Posterior vena cava (tissue), 2 donors: ENCODE measurements at regions of chr3 and their contacts with region 1.

Region 1: DNA sequence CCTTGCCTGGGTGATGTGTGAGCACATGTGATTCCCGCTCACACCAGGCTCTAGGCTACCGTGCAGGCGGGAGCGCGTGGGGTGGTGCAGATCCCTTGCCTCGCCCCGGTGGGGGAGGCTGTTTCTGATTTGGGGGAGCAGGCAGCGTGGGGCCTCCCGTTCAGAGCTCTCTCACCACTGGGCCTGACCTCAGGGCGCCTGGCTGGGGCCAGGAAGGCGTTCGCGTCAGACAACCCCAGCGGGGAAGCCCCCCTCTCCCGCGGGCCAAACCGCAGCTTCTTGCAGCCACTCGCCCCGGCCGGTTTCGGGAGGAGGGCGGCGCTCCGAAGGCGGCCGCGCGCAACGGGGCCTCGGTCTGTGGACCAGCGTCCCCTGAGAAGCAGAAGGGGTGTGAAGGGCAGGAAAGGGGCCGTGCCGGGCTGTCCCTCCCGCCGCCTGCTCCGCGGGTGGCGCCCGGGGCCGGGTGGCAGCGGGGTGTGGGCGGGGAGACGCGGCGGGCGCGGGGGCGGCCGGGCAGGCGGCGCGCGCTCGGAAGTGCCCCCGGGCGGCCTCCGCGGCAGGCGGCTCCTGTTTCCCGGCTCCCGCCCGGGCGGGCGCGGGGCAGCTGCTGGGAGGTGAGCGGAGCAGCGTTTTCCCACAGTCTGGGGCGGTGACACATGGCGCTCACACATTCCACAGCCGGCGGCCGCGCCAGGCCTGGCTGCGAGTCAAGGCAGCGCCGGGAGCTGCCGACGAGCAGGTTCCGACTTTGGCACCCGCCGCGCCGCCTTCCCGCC is 65.1 kb upstream of the HES1 start:
- DNase-seq: peak; percentile 94

Region 2: DNA sequence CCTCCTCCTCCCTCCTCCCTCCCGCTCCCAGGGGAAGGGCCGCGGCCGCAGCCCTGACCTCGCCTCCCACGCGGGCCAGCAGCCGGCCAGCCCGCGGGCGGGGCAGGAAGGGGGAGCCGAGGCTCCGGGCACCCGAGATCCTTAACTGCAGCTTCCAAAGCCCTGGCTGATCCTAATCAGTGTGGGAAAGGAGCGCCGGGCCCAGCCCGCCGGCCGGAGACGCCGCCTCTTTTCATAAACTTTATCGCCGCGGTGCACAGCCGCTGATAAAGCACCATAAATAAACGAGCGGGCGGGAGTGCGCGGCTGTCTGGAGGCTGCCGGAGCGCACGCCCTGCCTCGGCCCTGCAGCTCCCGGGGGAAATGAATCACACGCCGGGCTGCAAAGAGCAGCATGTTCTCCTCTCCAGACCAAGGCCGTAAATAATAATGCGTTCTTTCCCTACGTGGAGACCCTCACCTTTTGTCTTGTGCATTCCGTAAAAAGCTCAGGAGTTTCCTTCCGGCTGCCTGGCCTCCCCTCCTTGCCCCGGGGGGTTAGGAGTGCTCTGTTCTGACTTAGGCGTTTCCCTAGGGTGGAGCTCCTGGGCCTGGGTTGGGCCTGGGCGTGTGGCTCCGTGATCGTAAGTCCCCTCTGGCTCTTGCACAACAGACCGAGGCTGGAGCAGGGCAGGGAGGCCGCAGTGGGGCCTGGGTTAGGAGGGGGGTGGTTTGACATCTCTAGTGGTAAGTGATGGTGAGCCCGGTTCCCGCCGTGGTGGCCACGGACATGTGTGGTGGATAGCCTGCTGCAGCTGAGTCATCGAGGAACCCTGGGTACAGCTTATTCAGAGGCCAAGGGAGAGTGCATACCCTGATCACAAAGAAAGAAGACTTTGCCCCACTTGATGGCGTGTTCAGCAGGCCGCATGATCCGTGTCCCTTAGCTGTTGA is 67.4 kb before region 1 on chr3:
- intact Hi-C with region 1: loop called in 1 of 2 experiments (anchors 10 kb)
- DNase-seq: peak; percentile 98

Region 3: GRCh38 chr3:194030369-194030768 is 40.5 kb before region 1 on chr3:
- intact Hi-C with region 1: no loop called
- DNase-seq: no peak